RWPE1 (cell line): ENCODE measurements at regions of chr12 and their contacts with region 1.

Region 1: DNA sequence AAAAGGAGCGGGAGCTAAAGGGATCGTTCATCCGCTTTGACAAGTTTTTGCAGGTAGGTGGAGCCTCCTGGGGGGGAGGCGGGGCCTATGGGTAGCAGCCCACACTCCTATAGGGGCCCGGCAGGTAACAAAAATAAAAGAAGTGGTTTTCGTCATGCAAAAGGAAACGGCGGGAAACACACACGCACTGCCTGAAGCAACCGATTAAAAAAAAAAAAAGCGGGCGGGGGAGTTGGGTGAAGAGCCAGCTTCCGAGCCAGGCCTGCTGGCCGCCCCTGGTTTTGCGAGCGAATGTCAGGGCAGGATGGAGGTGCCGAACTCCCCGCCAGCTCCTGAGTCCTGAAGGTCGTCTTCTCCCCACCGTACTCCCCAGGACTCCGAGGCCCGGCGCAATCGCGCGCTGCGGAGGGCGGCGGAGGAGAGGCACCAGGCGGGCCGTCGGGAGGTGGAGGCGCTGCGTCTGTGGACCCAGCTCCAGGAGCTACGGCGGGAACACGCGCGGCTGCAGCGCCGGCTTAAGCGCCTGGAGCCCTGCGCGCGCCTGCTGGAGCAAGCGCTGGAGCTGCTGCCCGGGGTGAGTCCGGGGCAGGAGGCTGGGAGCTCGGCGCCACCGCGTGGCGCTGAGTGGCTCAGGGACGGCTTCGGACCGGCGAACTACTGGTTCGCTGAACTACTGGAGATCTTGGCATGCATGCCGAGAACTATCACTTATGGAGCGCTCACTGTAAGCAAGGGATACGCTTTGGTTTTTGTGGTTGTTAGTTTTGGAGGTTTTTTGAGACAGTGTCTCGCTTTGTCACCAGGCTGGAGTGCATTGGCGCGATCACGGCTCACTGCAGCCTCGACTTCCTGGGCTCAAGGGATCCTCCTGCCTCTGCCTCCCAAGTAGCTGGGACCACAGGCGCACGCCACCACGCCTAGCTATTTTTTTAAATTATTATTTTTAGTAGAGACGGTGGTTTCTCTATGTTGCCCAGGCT is 3.6 kb downstream of the CFAP73 start:
- DNase-seq: peak; percentile 80
- H3K27ac ChIP-seq: peak overlapping the region; percentile 42
- CTCF ChIP-seq: peak; percentile 69

Region 2: DNA sequence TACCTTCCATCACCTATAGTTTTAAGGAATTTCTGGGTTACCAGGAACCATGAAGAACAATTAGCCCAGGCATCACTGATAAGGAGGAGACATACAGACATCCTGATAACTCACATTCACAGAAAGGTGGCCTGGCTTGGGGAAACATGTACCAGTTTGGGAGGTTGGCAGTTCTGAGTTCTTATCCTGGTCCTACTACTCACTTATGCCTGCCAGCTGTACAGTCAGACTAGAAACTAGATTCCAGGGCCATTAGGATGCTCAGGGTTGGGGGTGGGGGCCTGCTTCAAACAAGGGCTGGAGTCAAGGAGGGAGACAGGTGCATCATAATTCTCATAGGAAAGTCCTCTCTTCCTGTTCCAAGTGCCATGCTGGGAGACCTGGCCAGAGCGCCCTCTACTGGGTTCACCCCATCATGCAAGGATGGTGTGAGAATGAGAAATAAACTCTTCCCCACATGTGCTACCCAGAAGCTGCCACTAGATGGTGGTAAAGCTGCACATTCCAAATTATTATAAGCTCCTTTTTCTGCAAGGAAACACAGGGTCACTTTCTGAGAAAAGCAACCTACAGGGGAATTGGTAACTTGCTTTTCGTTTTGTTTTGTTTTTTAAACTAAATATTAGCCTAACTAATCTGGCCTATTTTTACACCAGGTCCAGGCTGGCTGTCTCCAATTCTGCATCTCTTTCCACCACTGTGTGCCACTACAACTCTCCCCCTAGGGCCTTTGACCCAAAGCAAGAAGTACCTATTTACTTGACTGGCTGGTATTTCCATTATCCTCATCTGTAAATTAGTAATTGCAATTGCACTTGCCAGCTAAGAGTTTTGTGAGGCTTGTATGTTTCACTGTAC is 160.4 kb before region 1 on chr12:
- CTCF ChIA-PET with region 1: interaction called, 13 read pairs
- POLR2A ChIA-PET with region 1: no interaction called
- DNase-seq: peak; percentile 80
- H3K27ac ChIP-seq: no peak overlapping the region
- CTCF ChIP-seq: peak; percentile 88

Region 3: DNA sequence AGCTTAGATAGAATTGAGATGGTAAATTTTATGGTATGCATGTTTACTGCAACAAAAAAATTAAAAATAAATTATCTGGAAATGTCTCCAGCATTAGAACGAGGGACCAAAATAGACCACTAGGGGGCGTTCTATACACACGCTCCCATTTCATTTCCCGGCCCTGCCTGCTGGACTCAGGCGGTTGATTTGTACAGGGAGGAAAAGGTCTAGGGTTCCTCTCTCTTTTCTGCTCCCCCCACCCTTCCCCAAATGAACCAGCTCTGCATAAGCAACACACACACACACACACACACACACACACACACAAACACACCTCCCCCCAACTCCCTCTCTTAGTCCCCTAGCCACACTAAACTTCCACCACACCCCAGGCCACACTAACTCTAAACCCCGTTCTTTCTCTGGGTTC is 104.4 kb before region 1 on chr12:
- CTCF ChIA-PET with region 1: interaction called, 20 read pairs
- POLR2A ChIA-PET with region 1: no interaction called
- DNase-seq: peak; percentile 75
- H3K27ac ChIP-seq: no peak overlapping the region
- CTCF ChIP-seq: peak; percentile 82

Region 4: DNA sequence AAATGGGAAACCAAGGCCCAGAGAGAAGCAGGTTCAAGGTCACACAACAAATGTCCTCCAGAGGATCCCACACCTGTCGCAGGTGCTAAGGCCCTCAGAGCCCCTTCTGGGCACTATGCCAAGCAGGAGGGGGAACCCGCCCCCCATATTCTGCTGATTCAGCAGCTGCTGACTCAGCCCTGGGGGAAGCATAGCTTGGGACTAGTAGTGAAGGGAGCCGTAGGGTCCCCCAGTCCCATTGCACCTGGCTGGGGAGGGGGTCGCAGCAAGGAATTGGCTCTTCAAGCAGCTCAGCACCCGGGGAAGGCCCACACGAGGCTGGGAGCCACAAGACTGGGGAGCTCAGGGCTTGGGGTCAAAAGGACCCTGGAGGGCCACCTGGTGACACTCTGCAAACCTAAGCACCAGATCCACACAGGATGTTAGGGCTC is 18.6 kb before region 1 on chr12:
- CTCF ChIA-PET with region 1: interaction called, 11 read pairs
- POLR2A ChIA-PET with region 1: no interaction called
- DNase-seq: no peak
- H3K27ac ChIP-seq: no peak overlapping the region
- CTCF ChIP-seq: no peak